Psoas muscle (tissue), 8 donors: ENCODE measurements at regions of chr22 and their contacts with region 1.

Region 1: DNA sequence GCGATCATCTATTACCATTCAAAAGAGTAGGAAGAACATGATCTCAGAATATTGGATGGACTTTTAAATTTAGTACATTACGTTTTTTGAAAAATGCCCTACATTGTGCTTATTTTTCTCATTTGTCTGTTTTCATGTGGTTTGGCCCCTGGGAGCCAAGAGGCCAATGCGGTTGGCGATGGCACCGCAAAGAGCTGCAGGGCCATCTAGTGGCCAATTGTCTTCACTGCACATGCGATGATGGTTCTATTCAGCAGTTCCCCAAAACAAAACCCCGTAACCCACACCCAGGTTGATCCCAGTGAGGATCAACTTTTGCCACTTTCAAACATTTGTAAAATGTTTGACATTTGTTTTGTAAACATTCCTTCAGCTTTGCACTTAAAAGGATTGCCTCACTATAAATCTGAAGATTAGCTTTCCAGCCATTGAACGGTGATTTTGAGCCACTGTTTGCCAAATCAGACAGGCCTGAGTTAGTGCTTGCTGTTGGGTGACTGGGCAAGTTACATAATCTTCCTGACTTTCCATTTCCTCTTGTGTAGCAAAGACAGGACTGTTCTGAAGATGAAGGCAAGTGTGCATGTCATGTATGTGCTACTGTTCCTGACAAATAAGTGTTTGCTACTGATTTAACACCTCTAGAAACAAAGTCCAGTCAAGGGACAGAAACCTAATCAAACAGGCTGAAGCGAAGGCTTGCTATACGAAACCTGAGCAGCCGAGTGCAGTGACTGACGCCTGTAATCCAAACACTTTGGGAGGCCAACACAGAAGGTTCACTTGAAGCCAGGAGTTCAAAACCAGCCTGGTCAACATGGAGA is 29.2 kb upstream of the XBP1 start:
- DNase-seq: peak; percentile 75 to 84
- ATAC-seq: peak; percentile 80 to 92 (median 88)
- H3K4me3 ChIP-seq: no peak overlapping the region
- H3K27ac ChIP-seq: no peak overlapping the region
- H3K4me1 ChIP-seq: peaks cover 3% of the 10 kb centered on the region
- H3K27me3 ChIP-seq: no peaks in the 10 kb centered on the region
- CTCF ChIP-seq: peak; percentile 99

Region 2: DNA sequence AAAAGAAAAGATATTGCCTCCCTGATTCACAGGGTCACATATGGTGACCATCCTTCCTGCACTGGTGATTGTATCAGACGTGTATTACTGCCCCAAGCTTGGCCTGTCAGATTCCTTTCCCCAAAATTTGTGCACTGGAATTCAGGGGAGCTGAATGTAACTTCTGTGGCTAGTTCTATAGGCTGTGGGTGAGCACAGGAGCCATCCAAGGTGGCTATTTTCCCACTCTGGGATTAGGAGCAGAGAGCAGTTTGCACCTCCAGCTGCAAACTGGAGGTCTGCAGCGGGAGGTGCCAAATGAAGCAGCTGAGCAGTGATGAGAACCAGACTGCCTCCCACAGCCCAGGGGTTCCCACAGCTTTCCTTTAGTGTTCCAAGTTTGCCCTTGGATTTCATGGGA is 786.3 kb before region 1 on chr22:
- intact Hi-C with region 1: loop called in 1 of 2 experiments (anchors 2 kb)
- DNase-seq: no peak
- ATAC-seq: no peak
- H3K4me3 ChIP-seq: no peak overlapping the region
- H3K27ac ChIP-seq: no peak overlapping the region
- H3K4me1 ChIP-seq: no peaks in the 10 kb centered on the region
- H3K27me3 ChIP-seq: no peaks in the 10 kb centered on the region
- CTCF ChIP-seq: no peak

Region 3: DNA sequence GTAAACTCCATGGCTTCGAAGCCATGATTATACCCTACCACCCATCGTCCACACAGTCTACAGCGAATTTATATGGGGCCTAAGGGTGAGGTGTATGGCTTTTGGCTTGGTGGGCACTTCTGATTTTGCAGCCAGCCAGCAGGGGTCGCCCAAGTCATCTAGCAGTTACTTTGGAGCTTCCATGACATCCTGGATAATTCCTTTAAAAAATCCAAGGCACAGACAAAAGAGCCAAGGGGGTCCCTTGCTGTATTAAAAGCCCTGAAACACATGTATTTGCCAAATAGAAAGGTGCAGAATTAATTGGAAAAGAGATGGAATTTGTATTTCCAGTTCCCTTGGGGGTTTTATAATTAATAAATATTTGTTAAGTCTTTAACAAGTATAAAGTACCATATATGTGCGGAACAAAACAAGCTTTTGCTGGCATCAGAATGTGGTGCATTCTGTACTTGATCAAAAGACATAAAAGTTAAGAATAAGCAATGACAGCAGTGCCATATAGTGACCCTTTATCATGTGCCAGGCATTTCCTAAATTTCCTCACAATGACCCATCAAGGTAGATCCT is 777.7 kb before region 1 on chr22:
- intact Hi-C with region 1: loop called in 1 of 2 experiments (anchors 10 kb)
- DNase-seq: peak; percentile 72 to 88
- ATAC-seq: peak; percentile 67 to 84 (median 76)
- H3K4me3 ChIP-seq: no peak overlapping the region
- H3K27ac ChIP-seq: no peak overlapping the region
- H3K4me1 ChIP-seq: no peaks in the 10 kb centered on the region
- H3K27me3 ChIP-seq: no peaks in the 10 kb centered on the region
- CTCF ChIP-seq: peak; percentile 92

Region 4: GRCh38 chr22:28600546-28601143 is 228.9 kb before region 1 on chr22:
- intact Hi-C with region 1: loop called (anchors 1 to 2 kb)
- DNase-seq: no peak
- ATAC-seq: peak in 2 of 4 donors; percentile 50 to 68
- H3K4me3 ChIP-seq: no peak overlapping the region
- H3K27ac ChIP-seq: no peak overlapping the region
- H3K4me1 ChIP-seq: no peaks in the 10 kb centered on the region
- H3K27me3 ChIP-seq: no peaks in the 10 kb centered on the region
- CTCF ChIP-seq: peak; percentile 63

Region 5: DNA sequence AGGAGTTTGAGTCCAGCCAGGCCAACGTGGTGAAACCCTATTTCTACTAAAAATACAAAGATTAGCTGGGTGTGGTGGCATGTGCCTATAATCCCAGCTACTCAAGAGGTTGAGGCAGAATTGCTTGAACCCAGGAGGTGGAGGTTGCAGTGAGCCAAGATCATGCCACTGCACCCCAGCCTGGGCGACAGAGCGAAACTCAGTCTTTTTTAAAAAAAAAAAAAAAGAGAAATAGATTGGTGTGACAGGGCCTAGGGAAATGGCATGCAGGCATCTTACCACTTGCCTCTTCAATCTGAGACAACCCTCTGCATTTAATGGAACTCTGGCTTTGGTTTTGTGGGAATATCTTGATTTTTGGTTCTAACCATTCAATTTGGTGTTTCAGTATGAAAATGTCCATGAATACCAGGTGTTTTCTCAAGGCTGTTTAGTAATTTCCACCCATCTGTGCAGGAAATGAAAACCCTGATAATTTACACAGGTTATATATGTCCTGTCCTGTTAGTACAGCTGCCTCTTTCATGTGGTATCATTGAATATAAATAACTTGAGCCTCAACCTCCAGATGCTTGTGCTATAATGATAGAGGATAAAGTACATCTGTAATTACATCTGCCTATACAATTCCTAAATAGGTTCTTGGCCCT is 37.6 kb before region 1 on chr22:
- intact Hi-C with region 1: loop called in 1 of 2 experiments (anchors 5 kb)
- DNase-seq: no peak
- ATAC-seq: peak in 3 of 4 donors; percentile 5 to 37 (median 30)
- H3K4me3 ChIP-seq: no peak overlapping the region
- H3K27ac ChIP-seq: no peak overlapping the region
- H3K4me1 ChIP-seq: peaks cover 18% of the 10 kb centered on the region
- H3K27me3 ChIP-seq: no peaks in the 10 kb centered on the region
- CTCF ChIP-seq: no peak